ENCODE measurements at regions of chr15 and their contacts with region 1.

Region 1: DNA sequence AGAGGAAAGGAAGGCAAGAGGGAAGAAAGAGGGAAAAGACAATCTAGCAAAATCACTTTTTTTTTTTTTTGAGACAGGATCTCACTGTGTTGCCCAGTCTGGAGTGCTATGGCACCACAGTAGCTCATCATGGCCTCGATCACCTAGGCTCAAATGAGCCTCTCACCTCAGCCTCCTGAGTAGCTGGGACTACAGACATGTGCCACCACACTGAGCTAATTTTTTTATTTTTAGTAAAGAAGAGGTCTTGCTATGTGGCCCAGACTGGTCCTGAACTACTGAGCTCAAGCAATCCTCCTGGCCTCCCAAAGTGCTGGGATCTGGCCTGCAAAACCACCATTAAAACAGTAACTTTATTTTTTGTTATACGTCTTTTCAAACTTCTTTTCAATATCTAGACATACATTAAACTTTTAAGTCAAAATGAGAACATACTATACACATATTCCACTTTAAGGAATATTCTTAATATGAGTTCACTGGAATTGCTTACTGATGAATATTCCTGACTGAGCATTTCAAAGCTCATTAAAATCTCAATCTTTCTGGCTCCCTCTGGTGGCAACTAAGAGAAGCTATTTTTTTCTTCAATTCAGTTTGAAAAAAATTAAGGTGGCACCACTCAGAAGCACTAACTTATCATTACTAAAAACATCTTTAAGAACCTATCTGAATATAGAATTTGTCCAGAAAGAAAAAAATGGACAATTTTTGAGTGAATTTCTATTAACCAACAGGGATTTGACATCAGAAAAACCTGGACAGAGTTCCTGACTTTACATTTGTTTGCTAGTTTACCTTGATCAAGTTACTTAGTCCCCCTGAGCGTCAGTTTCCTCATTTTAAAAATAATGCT is 40.9 kb downstream of the UACA start:
- DNase-seq: no peak
- ATAC-seq: peak; percentile 41 to 48
- H3K4me3 ChIP-seq: no peak overlapping the region
- H3K27ac ChIP-seq: peak overlapping the region; percentile 61 to 88 (median 78)
- H3K4me1 ChIP-seq: peaks cover 58 to 76% of the 10 kb centered on the region in 2 donors
- H3K27me3 ChIP-seq: no peaks in the 10 kb centered on the region
- CTCF ChIP-seq: peak; percentile 63 to 93 (median 71)
- POLR2A ChIP-seq: no peak

Region 2: GRCh38 chr15:70670680-70671079 is 51.8 kb before region 1 on chr15:
- in situ Hi-C with region 1: loop called in 1 of 4 experiments (anchors 10 kb)
- intact Hi-C with region 1: no loop called
- DNase-seq: no peak
- ATAC-seq: no peak
- H3K4me3 ChIP-seq: no peak overlapping the region
- H3K27ac ChIP-seq: no peak overlapping the region
- H3K4me1 ChIP-seq: peaks cover 0 to 3% of the 10 kb centered on the region in 2 donors
- H3K27me3 ChIP-seq: no peaks in the 10 kb centered on the region
- CTCF ChIP-seq: no peak
- POLR2A ChIP-seq: no peak

Region 3: DNA sequence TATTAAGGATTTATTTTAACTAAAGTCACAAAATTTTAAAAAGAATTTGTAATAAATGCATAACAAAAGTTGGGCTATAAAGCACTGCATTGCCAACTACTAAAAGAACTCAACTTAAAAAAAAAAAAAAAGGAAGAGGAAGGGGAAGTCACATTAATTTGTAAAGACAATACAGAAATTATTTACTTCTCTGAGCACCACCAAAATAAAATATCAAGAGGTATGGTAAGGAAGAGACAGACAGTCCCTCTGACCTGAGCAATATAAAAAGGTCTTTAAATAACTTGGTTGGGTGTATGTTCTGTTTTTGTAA is 42.6 kb before region 1 on chr15:
- in situ Hi-C with region 1: loop called in 1 of 4 experiments (anchors 10 kb)
- intact Hi-C with region 1: loop called (anchors 1 kb)
- DNase-seq: no peak
- ATAC-seq: no peak
- H3K4me3 ChIP-seq: no peak overlapping the region
- H3K27ac ChIP-seq: peak overlapping the region in 3 of 4 donors; percentile 42 to 53 (median 51)
- H3K4me1 ChIP-seq: peaks cover 8 to 13% of the 10 kb centered on the region in 2 donors
- H3K27me3 ChIP-seq: no peaks in the 10 kb centered on the region
- CTCF ChIP-seq: peak in 1 of 5 experiments; percentile 0
- POLR2A ChIP-seq: no peak

Region 4: DNA sequence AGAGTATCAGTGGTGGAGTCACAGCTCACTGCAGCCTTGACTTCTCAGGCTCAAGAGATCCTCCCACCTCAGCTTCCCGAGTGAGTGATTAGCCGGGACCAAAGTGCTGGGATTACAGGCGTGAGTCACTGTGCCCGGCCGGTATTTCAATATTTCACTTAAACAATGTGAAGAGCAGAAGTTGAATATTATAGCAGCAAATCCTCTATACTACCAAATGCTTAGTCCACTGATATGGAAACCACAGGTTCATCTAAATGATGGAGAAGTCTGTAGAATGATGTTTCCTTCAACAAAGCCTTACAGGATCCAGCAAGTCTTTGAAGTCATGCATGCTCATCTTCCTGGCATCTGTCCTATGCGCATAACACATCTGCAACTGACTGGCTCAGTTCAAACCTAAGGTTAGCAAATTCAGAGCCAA is 61.1 kb after region 1 on chr15:
- in situ Hi-C with region 1: no loop called
- intact Hi-C with region 1: no loop called
- DNase-seq: no peak
- ATAC-seq: no peak
- H3K4me3 ChIP-seq: no peak overlapping the region
- H3K27ac ChIP-seq: no peak overlapping the region
- H3K4me1 ChIP-seq: no peaks in the 10 kb centered on the region
- H3K27me3 ChIP-seq: no peaks in the 10 kb centered on the region
- CTCF ChIP-seq: no peak
- POLR2A ChIP-seq: no peak

Region 5: GRCh38 chr15:70806992-70807712 is 84.7 kb after region 1 on chr15:
- in situ Hi-C with region 1: no loop called
- intact Hi-C with region 1: loop called (anchors 5 kb)
- DNase-seq: peak; percentile 22 to 46
- ATAC-seq: no peak
- H3K4me3 ChIP-seq: no peak overlapping the region
- H3K27ac ChIP-seq: peak overlapping the region in 1 of 4 donors; percentile 2
- H3K4me1 ChIP-seq: peaks cover 0 to 14% of the 10 kb centered on the region in 2 donors
- H3K27me3 ChIP-seq: no peaks in the 10 kb centered on the region
- CTCF ChIP-seq: no peak
- POLR2A ChIP-seq: no peak